Esophagus muscularis mucosa (tissue), 4 donors: ENCODE measurements at regions of chr12 and their contacts with region 1.

Region 1: GRCh38 chr12:28227251-28227650 is 37.0 kb downstream of the CCDC91 start:
- DNase-seq: no peak
- H3K4me3 ChIP-seq: no peak overlapping the region
- H3K27ac ChIP-seq: no peak overlapping the region
- H3K4me1 ChIP-seq: peaks cover 0 to 53% (median 37%) of the 10 kb centered on the region in 4 donors
- H3K27me3 ChIP-seq: no peaks in the 10 kb centered on the region
- CTCF ChIP-seq: no peak
- EP300 ChIP-seq: no peak
- POLR2A ChIP-seq: no peak

Region 2: DNA sequence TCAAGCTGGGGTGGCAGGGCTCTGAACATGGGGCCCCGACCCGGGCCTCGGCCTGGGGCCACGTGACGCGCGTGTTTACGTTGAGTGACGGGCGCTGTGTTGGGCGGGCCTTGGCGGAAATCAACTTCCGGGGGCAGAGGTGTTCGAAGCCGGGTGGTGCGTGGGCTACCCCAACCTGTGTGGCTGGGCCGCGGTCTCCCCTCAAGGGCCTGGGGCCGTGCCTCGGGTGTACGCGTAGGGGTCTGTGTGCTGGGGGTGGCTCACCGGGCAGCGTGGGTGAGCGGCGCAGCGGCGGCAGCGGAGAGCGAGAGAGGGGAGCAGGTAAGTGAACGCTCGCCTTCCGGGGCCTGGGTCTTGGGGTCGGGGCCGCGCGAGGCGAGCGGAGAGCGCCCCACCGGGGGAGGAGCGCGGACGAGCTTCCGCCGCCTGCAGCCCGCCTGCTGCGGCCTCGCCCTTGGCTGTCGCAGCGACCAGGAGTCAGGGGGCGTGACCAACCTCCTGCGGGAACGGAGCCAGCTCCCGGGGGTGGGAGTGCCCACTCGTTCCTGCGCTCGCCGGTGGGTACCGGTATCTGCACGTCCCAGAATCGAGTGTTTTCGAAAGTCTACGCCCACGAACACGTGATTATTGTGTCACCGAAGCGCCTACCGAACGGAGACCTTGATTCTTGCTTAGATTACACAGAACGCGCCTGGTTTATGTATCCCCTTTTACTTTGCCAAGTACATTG is 36.8 kb before region 1 on chr12 and contains the start of gene CCDC91:
- intact Hi-C with region 1: loop called (anchors 5 kb)
- DNase-seq: peak; percentile 96
- H3K4me3 ChIP-seq: peak within 1 kb of the TSS; percentile 76 to 98 (median 90)
- H3K27ac ChIP-seq: peak within 1 kb of the TSS; percentile 96 to 100 (median 98)
- H3K4me1 ChIP-seq: peaks cover 11 to 19% (median 17%) of the 10 kb centered on the region in 4 donors
- H3K27me3 ChIP-seq: no peaks in the 10 kb centered on the region
- CTCF ChIP-seq: no peak
- EP300 ChIP-seq: peak; percentile 36
- POLR2A ChIP-seq: no peak
- total RNA-seq, gene CCDC91: 51.1 to 76.4 (median 59.0) TPM

Region 3: GRCh38 chr12:28360253-28360652 is 133.0 kb after region 1 on chr12:
- intact Hi-C with region 1: no loop called
- DNase-seq: no peak
- H3K4me3 ChIP-seq: no peak overlapping the region
- H3K27ac ChIP-seq: no peak overlapping the region
- H3K4me1 ChIP-seq: peaks cover 0 to under 1% (median 0%) of the 10 kb centered on the region in 4 donors
- H3K27me3 ChIP-seq: no peaks in the 10 kb centered on the region
- CTCF ChIP-seq: no peak
- EP300 ChIP-seq: no peak
- POLR2A ChIP-seq: no peak

Region 4: GRCh38 chr12:28446031-28446430 is 218.8 kb after region 1 on chr12:
- intact Hi-C with region 1: no loop called
- DNase-seq: no peak
- H3K4me3 ChIP-seq: no peak overlapping the region
- H3K27ac ChIP-seq: no peak overlapping the region
- H3K4me1 ChIP-seq: no peaks in the 10 kb centered on the region
- H3K27me3 ChIP-seq: no peaks in the 10 kb centered on the region
- CTCF ChIP-seq: no peak
- EP300 ChIP-seq: no peak
- POLR2A ChIP-seq: no peak